Naive thymus-derived CD4-positive, alpha-beta T cell (primary cell): ENCODE measurements at regions of chr14 and their contacts with region 1.

Region 1: GRCh38 chr14:69574263-69574953 is at the start of gene CCDC177:
- DNase-seq: peak; percentile 42 to 73 (median 66)
- ATAC-seq: peak; percentile 92
- H3K4me3 ChIP-seq: peak within 1 kb of the TSS; percentile 59
- H3K4me3 Mint-ChIP-seq: peak within 1 kb of the TSS; percentile 83 to 96 (median 87)
- H3K27ac ChIP-seq: no peak within 1 kb of the TSS
- H3K27ac Mint-ChIP-seq: peak within 1 kb of the TSS in 2 of 9 donors; percentile 32 to 36
- H3K4me1 ChIP-seq: peaks cover 9 to 16% of the 10 kb centered on the region in 2 donors
- H3K4me1 Mint-ChIP-seq: peaks cover 5 to 15% (median 12%) of the 10 kb centered on the region in 7 donors
- H3K27me3 ChIP-seq: peaks cover 0 to 6% of the 10 kb centered on the region in 2 donors
- H3K27me3 Mint-ChIP-seq: peaks cover 47 to 82% (median 48%) of the 10 kb centered on the region in 5 donors
- total RNA-seq, gene CCDC177: not detected

Region 2: DNA sequence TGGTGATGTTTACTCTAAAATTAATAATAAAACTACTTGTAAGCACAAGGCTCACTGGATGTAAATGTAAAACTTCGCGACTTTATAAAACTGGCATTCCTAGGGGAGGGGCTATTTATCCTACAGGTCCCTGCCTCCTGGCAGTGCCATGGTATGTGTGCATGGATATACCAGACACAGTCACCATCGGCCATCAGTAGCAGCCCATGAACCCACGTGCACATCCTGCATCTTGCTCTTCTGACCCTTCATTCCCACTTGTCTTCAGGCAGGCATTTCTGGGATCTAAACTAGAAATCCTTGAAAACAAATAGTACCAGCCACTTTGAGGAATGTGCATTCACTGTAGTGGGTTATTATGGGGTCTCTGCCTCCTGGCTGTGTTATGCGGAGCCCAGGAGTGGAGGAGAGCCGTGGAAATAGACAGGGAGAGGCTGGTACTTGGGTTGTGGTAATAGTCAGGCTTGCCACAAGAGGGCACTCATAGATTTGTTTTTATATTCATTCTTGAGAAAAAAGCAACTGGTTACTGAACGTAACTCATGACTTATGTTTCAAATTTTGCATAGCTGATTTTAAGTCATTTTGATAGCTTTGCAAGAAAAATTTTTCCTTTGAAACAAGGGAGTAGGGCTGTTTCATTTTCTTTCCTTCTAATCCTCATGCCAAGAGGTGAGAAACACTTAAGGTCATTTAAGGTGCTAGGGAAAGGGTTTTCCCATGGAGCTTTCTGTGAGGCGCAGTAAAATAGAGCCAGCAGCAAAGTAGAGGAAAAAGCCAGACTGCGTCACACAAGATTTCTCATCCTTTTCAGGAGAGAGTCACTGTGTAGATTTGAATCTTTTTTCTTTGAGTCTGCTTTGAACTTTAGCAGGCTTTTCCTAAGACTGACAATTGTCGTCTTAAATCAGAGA is 331.8 kb before region 1 on chr14:
- CTCF ChIA-PET with region 1: interaction called, 3 read pairs
- POLR2A ChIA-PET with region 1: no interaction called
- intact Hi-C with region 1: loop called (anchors 1 kb)
- DNase-seq: peak in 7 of 9 donors; percentile 23 to 61 (median 49)
- ATAC-seq: peak; percentile 78
- H3K4me3 ChIP-seq: no peak overlapping the region
- H3K4me3 Mint-ChIP-seq: no peak overlapping the region
- H3K27ac ChIP-seq: no peak overlapping the region
- H3K27ac Mint-ChIP-seq: peak overlapping the region in 1 of 9 donors; percentile 59
- H3K4me1 ChIP-seq: no peaks in the 10 kb centered on the region
- H3K4me1 Mint-ChIP-seq: peaks cover 0 to 4% (median 0%) of the 10 kb centered on the region in 7 donors
- H3K27me3 ChIP-seq: no peaks in the 10 kb centered on the region
- H3K27me3 Mint-ChIP-seq: no peaks in the 10 kb centered on the region

Region 3: DNA sequence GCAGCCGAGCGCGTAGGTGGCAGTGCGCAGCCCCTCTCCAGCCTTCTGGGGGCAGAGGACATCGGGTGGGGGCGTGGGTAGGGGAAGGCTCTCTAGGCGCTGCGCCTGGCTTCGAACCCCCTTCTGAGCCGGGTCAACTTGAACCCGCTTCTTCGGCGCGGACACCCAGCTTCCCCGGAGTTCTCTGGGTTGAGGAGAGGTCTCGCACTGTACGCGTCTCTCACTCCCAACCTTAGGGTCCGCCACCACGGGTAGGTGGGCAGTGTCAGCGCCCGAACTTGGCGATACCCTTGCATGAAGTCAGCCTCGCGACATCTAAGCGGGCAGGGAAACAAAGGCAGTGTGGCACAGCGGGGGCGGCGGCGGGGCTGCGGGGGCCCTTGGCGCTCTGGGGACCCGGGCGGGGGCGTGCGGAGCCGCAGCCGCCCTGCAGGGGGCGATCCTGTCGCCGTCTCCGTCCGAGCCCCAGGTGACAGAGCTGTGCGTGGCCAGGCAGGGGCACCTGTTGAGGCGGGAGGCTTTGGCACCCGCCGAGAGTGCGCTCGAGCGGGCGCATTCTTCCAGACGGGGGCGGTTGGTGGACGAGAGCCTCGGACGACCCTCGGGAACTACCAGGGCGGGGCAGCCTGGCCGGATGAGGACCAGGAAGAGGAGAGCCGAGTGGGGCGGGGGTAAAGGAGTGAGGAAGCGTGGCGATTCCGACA is 313.4 kb before region 1 on chr14:
- CTCF ChIA-PET with region 1: interaction called, 4 read pairs
- POLR2A ChIA-PET with region 1: no interaction called
- intact Hi-C with region 1: loop called in 1 of 2 experiments (anchors 5 kb)
- DNase-seq: peak in 5 of 9 donors; percentile 4 to 52 (median 12)
- ATAC-seq: peak; percentile 69
- H3K4me3 ChIP-seq: no peak overlapping the region
- H3K4me3 Mint-ChIP-seq: peak overlapping the region in 9 of 10 donors; percentile 21 to 85 (median 65)
- H3K27ac ChIP-seq: no peak overlapping the region
- H3K27ac Mint-ChIP-seq: no peak overlapping the region
- H3K4me1 ChIP-seq: no peaks in the 10 kb centered on the region
- H3K4me1 Mint-ChIP-seq: peaks cover 0 to 16% (median 5%) of the 10 kb centered on the region in 7 donors
- H3K27me3 ChIP-seq: peaks cover 0 to 10% of the 10 kb centered on the region in 2 donors
- H3K27me3 Mint-ChIP-seq: peaks cover 30 to 74% (median 51%) of the 10 kb centered on the region in 5 donors

Region 4: DNA sequence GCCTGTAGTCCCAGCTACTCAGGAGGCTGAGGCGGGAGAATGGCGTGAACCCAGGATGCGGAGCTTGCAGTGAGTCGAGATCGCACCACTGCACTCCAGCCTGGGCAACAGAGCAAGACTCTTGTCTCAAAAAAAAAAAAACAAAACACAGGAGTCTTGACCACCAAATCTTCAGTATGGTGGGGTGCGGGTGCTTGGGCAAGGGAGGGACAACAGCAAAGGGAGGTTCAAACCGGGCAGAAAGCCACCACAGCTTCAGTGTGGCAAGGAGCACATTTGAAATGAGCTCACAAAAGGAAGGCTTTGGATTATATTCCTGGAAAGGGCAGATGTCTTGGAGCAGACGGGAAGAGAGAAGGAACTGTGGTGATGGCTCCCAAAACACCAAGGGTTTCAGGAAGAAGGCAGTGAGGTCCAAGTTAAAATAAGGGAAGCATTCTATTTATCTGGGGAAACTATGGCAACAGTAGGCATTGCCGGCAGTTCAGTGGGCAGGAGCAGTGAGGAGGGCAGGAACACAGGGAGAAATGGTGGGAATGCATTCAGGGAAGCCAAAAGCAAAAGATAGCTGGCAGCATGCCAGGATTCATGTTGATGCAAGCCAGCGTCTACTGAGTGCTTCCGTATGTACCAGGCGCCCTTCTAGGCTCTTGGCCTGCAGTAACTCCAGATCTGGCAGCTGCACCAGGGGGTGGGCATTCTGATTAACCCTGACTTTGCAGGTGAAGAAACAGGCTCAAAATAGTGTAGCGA is 141.5 kb after region 1 on chr14:
- CTCF ChIA-PET with region 1: interaction called, 12 read pairs
- POLR2A ChIA-PET with region 1: interaction called, 7 read pairs
- intact Hi-C with region 1: no loop called
- DNase-seq: no peak
- ATAC-seq: peak; percentile 29
- H3K4me3 ChIP-seq: no peak overlapping the region
- H3K4me3 Mint-ChIP-seq: peak overlapping the region in 2 of 10 donors; percentile 18 to 72
- H3K27ac ChIP-seq: no peak overlapping the region
- H3K27ac Mint-ChIP-seq: peak overlapping the region in 8 of 9 donors; percentile 9 to 88 (median 50)
- H3K4me1 ChIP-seq: peaks cover 12 to 14% of the 10 kb centered on the region in 2 donors
- H3K4me1 Mint-ChIP-seq: peaks cover 27 to 80% (median 37%) of the 10 kb centered on the region in 7 donors
- H3K27me3 ChIP-seq: no peaks in the 10 kb centered on the region
- H3K27me3 Mint-ChIP-seq: no peaks in the 10 kb centered on the region